Endothelial cell of umbilical vein (primary cell): ENCODE measurements at regions of chr13 and their contacts with region 1.

Region 1: DNA sequence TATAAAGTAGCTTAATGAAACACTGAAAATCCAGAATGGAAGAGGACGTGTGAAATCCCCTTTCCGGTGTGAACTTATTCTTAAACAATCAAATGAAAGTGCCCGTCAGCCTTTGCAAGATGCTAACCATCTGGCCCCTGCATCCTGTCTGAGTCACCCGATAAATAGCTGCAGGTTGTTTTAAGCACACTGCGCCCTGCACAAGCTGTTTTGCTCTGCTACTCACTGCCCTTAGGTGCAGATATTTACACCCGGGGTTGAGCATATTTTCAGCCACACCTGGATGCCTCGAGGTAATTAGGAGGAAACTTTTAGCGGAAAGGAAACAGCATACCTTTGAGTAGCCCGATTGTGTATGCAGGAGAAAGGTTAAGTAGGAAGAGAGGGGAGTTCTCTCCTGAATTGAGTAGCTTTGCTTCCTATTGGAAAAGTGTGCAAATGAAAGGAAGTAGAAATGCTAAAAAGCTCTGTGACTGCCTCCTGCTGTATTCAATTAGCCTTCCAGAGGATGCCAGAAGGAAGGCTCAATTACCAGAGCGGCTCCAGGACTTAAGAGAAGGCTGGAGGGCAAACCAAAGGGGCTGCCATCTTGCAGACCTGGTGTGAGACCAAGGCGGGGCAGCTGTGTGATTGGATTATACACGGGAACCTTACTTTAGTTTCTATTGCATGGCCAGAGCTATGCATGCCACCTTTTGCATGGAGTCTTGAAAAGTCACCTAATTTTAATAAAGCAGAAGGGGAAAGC is 42.5 kb downstream of the IRS2 start:
- DNase-seq: peak; percentile 69
- H3K4me3 ChIP-seq: no peak overlapping the region
- H3K27ac ChIP-seq: no peak overlapping the region
- H3K4me1 ChIP-seq: no peaks in the 10 kb centered on the region
- H3K27me3 ChIP-seq: no peaks in the 10 kb centered on the region
- CTCF ChIP-seq: no peak
- POLR2A ChIP-seq: no peak

Region 2: DNA sequence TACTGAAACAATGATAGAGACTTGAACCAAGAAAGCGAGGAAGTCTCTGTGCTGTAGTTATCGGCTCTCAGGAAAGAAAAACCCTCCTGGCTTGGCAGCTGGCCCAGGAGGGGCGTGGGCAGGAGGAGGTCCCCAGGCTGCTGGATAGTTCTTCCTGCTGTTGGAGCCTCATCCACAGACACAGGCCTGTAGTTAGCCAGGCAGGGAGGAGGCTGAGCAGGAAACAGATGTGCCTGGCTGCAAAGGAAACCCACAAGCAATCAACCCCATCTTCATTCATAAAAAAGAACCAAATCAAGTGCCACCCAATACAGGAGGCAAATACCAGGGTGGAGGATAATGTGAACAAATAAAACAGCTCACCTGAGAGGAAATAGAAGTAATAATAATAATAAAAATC is 43.7 kb before region 1 on chr13:
- CTCF ChIA-PET with region 1: interaction called, 3 read pairs
- POLR2A ChIA-PET with region 1: interaction called, 3 read pairs
- dilution Hi-C with region 1: no loop called
- intact Hi-C with region 1: loop called (anchors 2 kb)
- DNase-seq: peak; percentile 71
- H3K4me3 ChIP-seq: no peak overlapping the region
- H3K27ac ChIP-seq: no peak overlapping the region
- H3K4me1 ChIP-seq: no peaks in the 10 kb centered on the region
- H3K27me3 ChIP-seq: no peaks in the 10 kb centered on the region
- CTCF ChIP-seq: no peak
- POLR2A ChIP-seq: no peak

Region 3: DNA sequence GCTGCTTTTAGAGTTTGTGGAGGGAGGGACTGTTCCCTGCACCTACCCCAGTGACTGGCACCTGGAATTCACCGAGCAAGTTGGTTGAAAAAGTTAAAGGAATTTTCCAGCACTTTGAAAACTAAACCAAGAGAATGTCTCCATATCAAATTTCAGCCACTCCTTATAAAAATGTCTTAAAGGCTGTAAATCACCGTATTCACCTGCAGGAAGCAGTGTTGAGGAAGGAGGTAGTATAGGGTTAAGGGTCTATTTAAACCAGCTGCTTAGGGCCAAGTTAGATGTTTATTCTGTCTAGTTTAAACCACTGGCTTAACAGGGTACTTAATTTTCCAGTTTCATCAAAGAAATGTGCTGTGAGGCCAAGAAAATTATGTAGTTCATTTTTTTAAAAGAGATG is 821.4 kb after region 1 on chr13:
- CTCF ChIA-PET with region 1: no interaction called
- POLR2A ChIA-PET with region 1: no interaction called
- dilution Hi-C with region 1: no loop called
- intact Hi-C with region 1: no loop called
- DNase-seq: no peak
- H3K4me3 ChIP-seq: no peak overlapping the region
- H3K27ac ChIP-seq: no peak overlapping the region
- H3K4me1 ChIP-seq: peaks cover 8% of the 10 kb centered on the region
- H3K27me3 ChIP-seq: peaks cover 20 to 22% of the 10 kb centered on the region in 2 experiments
- CTCF ChIP-seq: no peak
- POLR2A ChIP-seq: no peak

Region 4: DNA sequence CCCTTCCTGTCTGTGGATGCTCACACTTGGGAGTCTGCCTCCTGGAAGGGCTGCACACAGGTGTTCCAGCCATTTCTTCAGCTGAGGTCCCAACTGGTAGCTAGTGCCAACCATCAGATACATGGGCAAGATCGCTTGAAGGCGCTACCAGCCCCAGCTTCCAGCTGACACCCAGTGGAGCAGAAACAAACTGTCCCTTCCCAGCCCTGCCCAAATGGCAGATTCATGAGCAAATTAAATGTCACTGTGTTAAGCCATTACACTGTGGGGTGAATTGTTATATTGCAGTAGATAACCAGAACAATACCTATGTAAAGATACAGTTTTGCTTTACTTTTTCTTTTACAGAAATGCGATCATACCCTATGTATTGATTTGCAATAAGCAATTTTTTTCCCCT is 987.2 kb after region 1 on chr13:
- CTCF ChIA-PET with region 1: no interaction called
- POLR2A ChIA-PET with region 1: no interaction called
- dilution Hi-C with region 1: no loop called
- intact Hi-C with region 1: no loop called
- DNase-seq: no peak
- H3K4me3 ChIP-seq: no peak overlapping the region
- H3K27ac ChIP-seq: no peak overlapping the region
- H3K4me1 ChIP-seq: no peaks in the 10 kb centered on the region
- H3K27me3 ChIP-seq: no peaks in the 10 kb centered on the region
- CTCF ChIP-seq: no peak
- POLR2A ChIP-seq: no peak